Breast epithelium (tissue), 4 donors: ENCODE measurements at regions of chr10 and their contacts with region 1.

Region 1: DNA sequence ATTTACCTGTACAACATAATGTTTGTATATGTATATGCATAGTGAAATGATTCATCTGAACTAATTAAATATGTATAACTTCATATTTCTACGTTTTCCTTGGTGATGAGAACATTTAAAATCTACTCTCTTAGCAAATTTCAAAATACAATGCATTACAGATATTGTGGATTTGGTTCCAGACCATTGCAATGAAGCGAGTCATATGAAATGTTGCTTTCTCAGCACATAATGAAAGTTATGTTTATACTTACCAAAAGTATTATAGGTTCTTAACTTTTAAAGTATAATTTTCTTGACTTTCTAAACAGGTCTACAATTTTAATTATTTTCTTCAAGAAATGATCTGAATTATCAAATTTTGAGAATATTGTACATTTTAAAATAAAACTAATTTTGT is 189.2 kb downstream of the CSTF2T start:
- DNase-seq: no peak
- H3K4me3 ChIP-seq: no peak overlapping the region
- H3K27ac ChIP-seq: no peak overlapping the region
- H3K4me1 ChIP-seq: no peaks in the 10 kb centered on the region
- H3K27me3 ChIP-seq: no peaks in the 10 kb centered on the region
- CTCF ChIP-seq: no peak
- POLR2A ChIP-seq: no peak

Region 2: DNA sequence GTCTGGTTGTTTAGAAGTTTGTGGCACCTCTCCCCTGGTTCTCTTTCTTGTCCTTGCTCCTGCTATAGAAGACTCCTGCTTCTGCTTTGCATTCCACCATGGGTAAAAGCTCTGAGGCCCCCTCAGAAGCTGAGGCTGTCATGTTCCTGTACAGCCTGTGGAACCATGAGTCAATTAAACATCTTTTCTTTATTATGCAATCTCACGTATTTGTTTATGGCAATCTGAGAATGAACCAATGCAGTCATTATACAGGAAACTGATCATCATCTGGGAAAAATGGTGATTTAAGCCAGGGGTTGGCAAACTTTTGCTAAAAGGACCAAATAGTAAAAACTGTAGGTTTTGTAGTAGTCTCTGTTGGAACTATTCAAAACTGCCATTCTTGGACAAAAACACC is 13.8 kb after region 1 on chr10:
- intact Hi-C with region 1: no loop called
- DNase-seq: no peak
- H3K4me3 ChIP-seq: no peak overlapping the region
- H3K27ac ChIP-seq: no peak overlapping the region
- H3K4me1 ChIP-seq: no peaks in the 10 kb centered on the region
- H3K27me3 ChIP-seq: no peaks in the 10 kb centered on the region
- CTCF ChIP-seq: no peak
- POLR2A ChIP-seq: no peak

Region 3: DNA sequence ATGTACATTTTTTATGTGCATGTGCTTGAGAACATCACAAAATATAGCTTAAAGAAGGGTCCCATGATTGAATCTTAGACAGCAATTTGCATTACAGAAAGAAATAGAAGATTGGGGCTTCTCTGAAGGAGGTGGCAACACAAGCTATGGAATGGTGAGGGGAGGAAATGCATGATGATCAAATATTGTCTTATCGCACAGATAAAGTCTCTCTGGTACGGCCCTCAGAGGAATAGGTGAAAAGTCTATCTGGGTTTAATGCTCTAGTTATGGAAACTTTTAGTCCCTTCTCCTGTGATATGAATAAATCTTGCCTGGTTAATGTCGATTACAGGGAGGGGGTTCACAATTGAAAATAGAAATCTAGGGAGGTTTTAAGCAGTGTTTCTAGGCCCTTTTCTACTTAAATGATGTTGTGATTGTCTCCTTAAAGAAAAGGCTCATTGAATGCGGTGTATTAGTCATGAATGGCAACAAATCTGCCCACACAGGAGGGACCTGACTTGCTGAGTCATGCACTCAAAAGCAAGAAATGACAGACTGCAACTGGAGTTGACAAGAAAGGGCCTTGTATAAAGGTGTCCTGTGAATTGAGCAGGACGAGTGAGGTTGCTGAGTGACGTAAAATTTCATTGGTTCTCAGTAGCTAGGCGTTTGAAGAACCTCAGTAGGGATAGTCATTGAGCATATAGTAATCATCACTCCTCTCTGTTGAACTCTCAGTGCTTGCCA is 322.6 kb after region 1 on chr10:
- intact Hi-C with region 1: loop called (anchors 5 kb)
- DNase-seq: peak in 1 of 2 donors; percentile 19
- H3K4me3 ChIP-seq: no peak overlapping the region
- H3K27ac ChIP-seq: no peak overlapping the region
- H3K4me1 ChIP-seq: no peaks in the 10 kb centered on the region
- H3K27me3 ChIP-seq: no peaks in the 10 kb centered on the region
- CTCF ChIP-seq: no peak
- POLR2A ChIP-seq: no peak